AG04449 (cell line): ENCODE measurements at regions of chr2 and their contacts with region 1.

Region 1: GRCh38 chr2:40244675-40245074 is 207.2 kb downstream of the SLC8A1 start:
- DNase-seq: peak; percentile 55
- H3K4me3 ChIP-seq: no peak overlapping the region
- CTCF ChIP-seq: peak; percentile 70

Region 2: GRCh38 chr2:39913648-39914461 is 330.8 kb before region 1 on chr2:
- CTCF ChIA-PET with region 1: interaction called, 15 read pairs
- POLR2A ChIA-PET with region 1: interaction called, 4 read pairs
- DNase-seq: peak; percentile 56
- H3K4me3 ChIP-seq: no peak overlapping the region
- CTCF ChIP-seq: peak; percentile 54

Region 3: DNA sequence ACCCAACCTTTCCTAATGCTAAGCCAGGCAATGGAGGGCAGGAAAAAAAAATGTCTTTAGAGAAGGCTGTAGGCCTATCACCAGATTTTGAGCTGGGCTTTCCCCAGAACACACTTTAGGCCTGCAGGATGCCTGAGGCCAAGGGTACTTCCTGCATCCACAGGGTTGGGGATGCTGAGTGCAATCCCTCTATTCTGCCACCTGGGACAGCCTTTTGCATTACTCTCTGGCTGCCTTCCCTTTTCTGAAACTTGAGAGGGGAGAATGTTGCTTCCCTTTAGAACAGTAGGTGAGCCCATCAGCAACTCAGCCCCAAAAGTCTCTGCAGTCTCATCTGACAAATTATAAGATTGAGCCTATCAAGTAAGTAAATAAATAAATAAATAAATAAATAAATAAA is 12.0 kb after region 1 on chr2:
- CTCF ChIA-PET with region 1: interaction called, 15 read pairs
- POLR2A ChIA-PET with region 1: no interaction called
- DNase-seq: no peak
- H3K4me3 ChIP-seq: no peak overlapping the region
- CTCF ChIP-seq: peak; percentile 16

Region 4: GRCh38 chr2:40448468-40449079 is 203.9 kb after region 1 on chr2:
- CTCF ChIA-PET with region 1: interaction called, 12 read pairs
- POLR2A ChIA-PET with region 1: no interaction called
- DNase-seq: no peak
- H3K4me3 ChIP-seq: no peak overlapping the region
- CTCF ChIP-seq: peak; percentile 70